ENCODE measurements at regions of chr21 and their contacts with region 1.

Region 1: DNA sequence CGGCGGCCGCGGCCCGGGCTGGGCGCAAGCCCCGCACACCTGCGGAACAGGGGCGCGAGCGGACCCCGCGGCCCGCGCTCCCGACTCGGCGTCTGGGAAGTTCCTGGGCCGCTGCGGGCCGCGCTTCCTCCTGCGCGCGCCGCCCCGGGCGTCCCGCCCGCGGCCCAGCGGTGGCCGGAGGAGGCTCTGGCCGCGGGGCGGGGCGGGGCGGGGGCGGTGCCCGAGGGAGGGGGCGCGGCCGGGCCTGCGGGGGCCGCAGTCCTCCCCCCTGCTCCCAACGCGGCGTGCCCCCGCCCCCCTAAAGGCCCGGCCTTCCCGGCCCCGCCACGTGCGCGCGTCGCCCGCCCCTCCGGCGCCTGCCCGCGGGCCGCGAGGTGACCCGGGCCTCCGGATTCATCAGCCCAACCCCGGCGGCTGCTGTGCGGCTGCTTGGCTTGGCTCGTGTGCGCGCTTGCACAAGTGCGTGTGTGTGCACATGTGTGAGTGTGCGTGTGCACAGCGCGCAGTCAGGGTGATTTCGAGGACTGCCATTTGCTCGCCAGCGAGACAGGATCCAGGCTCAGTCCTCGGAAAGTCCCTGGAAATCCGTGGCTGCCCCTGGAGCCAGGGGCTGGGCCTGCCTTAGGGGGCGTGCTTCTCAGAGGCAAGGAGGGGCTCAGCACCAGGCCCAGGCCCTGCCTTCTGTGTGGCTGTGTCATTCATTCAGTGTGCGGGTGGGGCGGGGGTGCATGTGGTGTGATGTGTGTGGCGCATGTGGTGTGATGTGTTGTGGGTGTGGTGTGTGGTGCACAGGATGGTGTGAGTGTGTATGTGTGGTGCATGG is at the start of gene C2CD2:
- DNase-seq: peak; percentile 65
- H3K4me3 ChIP-seq: peak within 1 kb of the TSS; percentile 48 to 87 (median 70)
- H3K27ac ChIP-seq: peak within 1 kb of the TSS; percentile 43 to 79 (median 68)
- H3K4me1 ChIP-seq: peaks cover 0 to 30% (median 19%) of the 10 kb centered on the region in 4 donors
- H3K27me3 ChIP-seq: no peaks in the 10 kb centered on the region
- CTCF ChIP-seq: no peak
- EP300 ChIP-seq: no peak
- POLR2A ChIP-seq: no peak
- total RNA-seq, gene C2CD2: 3.0 to 15.7 (median 7.4) TPM

Region 2: DNA sequence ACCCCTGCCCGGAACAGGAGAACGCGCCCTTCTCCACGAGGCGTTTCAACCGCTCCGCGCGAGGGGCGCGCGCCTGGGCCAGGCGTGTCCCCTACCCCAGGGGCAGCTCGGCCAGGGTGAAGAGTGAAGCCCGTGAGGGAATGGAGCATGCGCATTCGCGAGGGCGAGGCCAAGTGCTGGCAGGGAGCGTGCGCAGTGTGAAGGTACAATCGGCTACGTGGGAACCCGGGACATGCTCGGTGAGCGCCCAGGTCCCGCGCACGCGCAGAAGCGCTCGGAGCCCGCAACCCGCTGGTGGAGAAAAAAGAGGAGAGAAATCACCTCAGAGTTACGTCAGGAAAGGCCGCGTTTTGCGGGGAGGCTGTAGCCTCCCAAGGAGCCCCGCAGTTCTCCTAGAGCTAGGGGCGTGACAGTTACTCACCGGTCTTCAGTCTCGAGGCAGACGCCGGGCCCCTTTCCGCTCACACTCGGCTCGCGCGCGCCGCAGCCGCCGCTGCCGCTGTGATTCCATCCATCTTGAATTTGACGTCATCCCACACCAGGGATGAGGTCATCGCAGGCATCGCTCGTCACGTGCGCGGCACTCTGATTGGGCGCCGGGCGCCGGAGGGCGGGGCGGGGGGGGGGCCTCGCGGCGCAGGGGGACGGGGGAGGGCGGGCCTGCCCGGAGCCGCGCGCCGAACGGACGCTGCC is 55.9 kb after region 1 on chr21 and contains the start of gene ZBTB21:
- in situ Hi-C with region 1: no loop called
- intact Hi-C with region 1: loop called (anchors 10 kb)
- DNase-seq: peak; percentile 99
- H3K4me3 ChIP-seq: peak within 1 kb of the TSS; percentile 69 to 99 (median 91)
- H3K27ac ChIP-seq: peak within 1 kb of the TSS; percentile 96 to 99 (median 99)
- H3K4me1 ChIP-seq: peaks cover 5 to 31% (median 19%) of the 10 kb centered on the region in 4 donors
- H3K27me3 ChIP-seq: no peaks in the 10 kb centered on the region
- CTCF ChIP-seq: no peak
- EP300 ChIP-seq: no peak
- POLR2A ChIP-seq: peak; percentile 95
- total RNA-seq, gene ZBTB21: 5.2 to 19.5 (median 9.7) TPM

Region 3: GRCh38 chr21:42062236-42063022 is 108.4 kb after region 1 on chr21:
- in situ Hi-C with region 1: no loop called
- intact Hi-C with region 1: no loop called
- DNase-seq: peak; percentile 76
- H3K4me3 ChIP-seq: peak overlapping the region in 1 of 4 donors; percentile 32
- H3K27ac ChIP-seq: peak overlapping the region; percentile 21 to 73 (median 67)
- H3K4me1 ChIP-seq: peaks cover 8 to 38% (median 25%) of the 10 kb centered on the region in 4 donors
- H3K27me3 ChIP-seq: no peaks in the 10 kb centered on the region
- CTCF ChIP-seq: peak in 1 of 5 experiments; percentile 8
- EP300 ChIP-seq: no peak
- POLR2A ChIP-seq: peak; percentile 67